ENCODE measurements at regions of chr11 and their contacts with region 1.

Region 1: GRCh38 chr11:61516675-61517572 is 8.4 kb downstream of the LRRC10B start:
- H3K4me3 ChIP-seq: no peak overlapping the region
- H3K27ac ChIP-seq: no peak overlapping the region
- H3K4me1 ChIP-seq: no peaks in the 10 kb centered on the region
- CTCF ChIP-seq: peak; percentile 80

Region 2: GRCh38 chr11:61460474-61460881 is 56.4 kb before region 1 on chr11:
- CTCF ChIA-PET with region 1: interaction called, 10 read pairs
- POLR2A ChIA-PET with region 1: no interaction called
- H3K4me3 ChIP-seq: no peak overlapping the region
- H3K27ac ChIP-seq: no peak overlapping the region
- H3K4me1 ChIP-seq: no peaks in the 10 kb centered on the region
- CTCF ChIP-seq: no peak

Region 3: GRCh38 chr11:61503212-61503770 is 13.6 kb before region 1 on chr11:
- CTCF ChIA-PET with region 1: interaction called, 19 read pairs
- POLR2A ChIA-PET with region 1: no interaction called
- H3K4me3 ChIP-seq: no peak overlapping the region
- H3K27ac ChIP-seq: no peak overlapping the region
- H3K4me1 ChIP-seq: no peaks in the 10 kb centered on the region
- CTCF ChIP-seq: no peak

Region 4: DNA sequence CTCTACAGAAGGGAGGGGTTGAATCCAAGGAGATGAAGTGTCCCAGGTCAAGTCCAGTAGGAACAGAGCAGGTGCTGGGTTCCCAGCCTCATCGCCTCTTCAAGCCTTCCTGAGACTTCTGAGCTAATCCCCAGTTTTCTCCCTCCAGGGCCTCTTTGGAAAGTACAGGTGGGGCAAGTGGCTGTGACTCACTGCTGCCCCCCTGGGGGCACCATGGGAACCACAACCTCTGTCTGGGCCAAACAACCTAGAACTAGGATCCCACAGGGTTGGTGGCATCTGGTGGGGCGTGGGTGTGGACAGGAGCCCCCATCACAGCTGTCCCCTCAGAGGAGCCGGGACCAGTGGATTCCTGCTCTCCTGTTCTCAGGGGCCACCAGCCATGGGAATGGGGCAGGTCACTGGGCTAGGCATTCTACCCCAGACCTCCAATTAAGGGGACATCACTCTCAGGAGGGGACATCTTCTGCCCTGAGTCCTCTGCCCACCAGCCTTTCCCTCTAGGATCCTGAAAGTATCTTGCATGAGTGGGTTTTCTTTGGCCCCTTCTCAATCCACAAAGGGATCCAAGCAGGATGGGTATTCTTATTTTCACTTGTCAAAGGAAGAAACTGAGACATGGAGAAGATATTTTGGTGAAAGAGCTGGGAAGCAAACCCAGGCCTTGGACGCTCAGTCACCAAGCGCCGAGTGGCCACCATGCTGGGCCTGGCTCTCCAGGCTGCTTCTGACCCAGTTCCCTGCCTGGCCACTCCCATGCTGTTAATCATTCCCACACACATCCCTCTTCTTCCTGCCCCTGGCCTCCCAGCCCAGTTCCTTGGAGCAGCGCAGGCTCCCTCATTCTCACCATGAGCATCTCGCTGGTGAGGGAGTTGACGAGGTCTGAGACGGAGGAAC is 15.5 kb after region 1 on chr11:
- CTCF ChIA-PET with region 1: interaction called, 27 read pairs
- POLR2A ChIA-PET with region 1: interaction called, 10 read pairs
- H3K4me3 ChIP-seq: no peak overlapping the region
- H3K27ac ChIP-seq: no peak overlapping the region
- H3K4me1 ChIP-seq: no peaks in the 10 kb centered on the region
- CTCF ChIP-seq: peak; percentile 45; the same call in 1 of the 2 replicates

Region 5: GRCh38 chr11:61639816-61640443 is 123.0 kb after region 1 on chr11:
- CTCF ChIA-PET with region 1: interaction called, 33 read pairs
- POLR2A ChIA-PET with region 1: no interaction called
- H3K4me3 ChIP-seq: no peak overlapping the region
- H3K27ac ChIP-seq: no peak overlapping the region
- H3K4me1 ChIP-seq: no peaks in the 10 kb centered on the region
- CTCF ChIP-seq: no peak

Region 6: GRCh38 chr11:61659414-61660209 is 142.7 kb after region 1 on chr11:
- CTCF ChIA-PET with region 1: no interaction called
- POLR2A ChIA-PET with region 1: no interaction called
- H3K4me3 ChIP-seq: no peak overlapping the region
- H3K27ac ChIP-seq: no peak overlapping the region
- H3K4me1 ChIP-seq: peaks cover 5% of the 10 kb centered on the region; the same call in 1 of the 2 replicates
- CTCF ChIP-seq: no peak